MCF 10A (cell line): ENCODE measurements at regions of chr1 and their contacts with region 1.

Region 1: GRCh38 chr1:248622570-248623001 is 12.3 kb downstream of the OR2T11 start:
- DNase-seq: peak; percentile 71
- H3K4me3 Mint-ChIP-seq: no peak overlapping the region
- H3K27ac Mint-ChIP-seq: no peak overlapping the region
- H3K4me1 Mint-ChIP-seq: peaks cover 9% of the 10 kb centered on the region
- H3K27me3 Mint-ChIP-seq: no peaks in the 10 kb centered on the region
- CTCF ChIP-seq: peak; percentile 74

Region 2: DNA sequence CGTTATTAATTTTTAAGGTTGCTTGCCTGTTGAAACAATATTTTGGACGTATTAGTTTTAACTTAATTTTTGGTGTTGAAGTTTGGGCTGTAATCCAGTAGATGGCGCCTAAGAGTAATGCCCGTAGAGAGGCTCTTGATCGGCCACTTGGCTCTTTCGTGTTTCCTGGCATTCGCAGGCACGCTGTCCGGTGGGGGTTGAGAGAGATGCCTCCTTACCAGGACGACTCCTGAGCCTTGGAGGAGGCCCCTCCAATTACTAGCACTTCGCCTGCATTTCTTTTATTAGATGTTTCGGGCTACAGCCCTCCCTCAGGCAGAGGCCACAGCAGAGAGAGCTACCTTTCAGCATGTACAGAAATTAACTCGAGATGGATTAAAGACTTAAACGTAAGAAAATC is 379.4 kb before region 1 on chr1:
- CTCF ChIA-PET with region 1: interaction called, 22 read pairs
- POLR2A ChIA-PET with region 1: no interaction called
- intact Hi-C with region 1: loop called (anchors 2 kb)
- DNase-seq: peak; percentile 67
- H3K4me3 Mint-ChIP-seq: peak overlapping the region; percentile 64
- H3K27ac Mint-ChIP-seq: no peak overlapping the region
- H3K4me1 Mint-ChIP-seq: peaks cover 13% of the 10 kb centered on the region
- H3K27me3 Mint-ChIP-seq: no peaks in the 10 kb centered on the region
- CTCF ChIP-seq: peak; percentile 92

Region 3: DNA sequence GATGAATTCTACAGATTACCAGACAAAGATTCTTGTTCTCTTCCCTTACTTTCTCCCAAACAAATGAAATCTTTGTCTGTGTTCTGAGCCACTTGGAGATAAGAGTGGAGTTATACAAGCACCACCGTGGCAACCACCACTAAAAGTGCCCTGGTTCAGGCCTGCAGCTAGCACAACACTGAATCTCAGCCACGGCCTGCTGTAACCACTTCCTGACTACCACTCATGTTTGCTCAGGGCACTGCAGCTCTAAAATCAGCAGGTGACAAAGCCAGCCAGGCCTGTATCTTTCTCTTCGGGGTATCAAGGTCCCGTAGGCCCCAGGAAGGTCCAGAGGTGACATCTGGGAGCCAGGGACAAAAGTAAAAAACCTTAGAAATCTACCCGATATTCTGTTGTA is 250.2 kb before region 1 on chr1:
- CTCF ChIA-PET with region 1: no interaction called
- POLR2A ChIA-PET with region 1: no interaction called
- intact Hi-C with region 1: no loop called
- DNase-seq: no peak
- H3K4me3 Mint-ChIP-seq: no peak overlapping the region
- H3K27ac Mint-ChIP-seq: no peak overlapping the region
- H3K4me1 Mint-ChIP-seq: peaks cover 16% of the 10 kb centered on the region
- H3K27me3 Mint-ChIP-seq: no peaks in the 10 kb centered on the region
- CTCF ChIP-seq: no peak

Region 4: GRCh38 chr1:248576260-248576980 is 46.2 kb before region 1 on chr1:
- CTCF ChIA-PET with region 1: no interaction called
- POLR2A ChIA-PET with region 1: no interaction called
- intact Hi-C with region 1: no loop called
- DNase-seq: no peak
- H3K4me3 Mint-ChIP-seq: no peak overlapping the region
- H3K27ac Mint-ChIP-seq: no peak overlapping the region
- H3K4me1 Mint-ChIP-seq: peaks cover 12% of the 10 kb centered on the region
- H3K27me3 Mint-ChIP-seq: peaks cover 26% of the 10 kb centered on the region
- CTCF ChIP-seq: no peak

Region 5: DNA sequence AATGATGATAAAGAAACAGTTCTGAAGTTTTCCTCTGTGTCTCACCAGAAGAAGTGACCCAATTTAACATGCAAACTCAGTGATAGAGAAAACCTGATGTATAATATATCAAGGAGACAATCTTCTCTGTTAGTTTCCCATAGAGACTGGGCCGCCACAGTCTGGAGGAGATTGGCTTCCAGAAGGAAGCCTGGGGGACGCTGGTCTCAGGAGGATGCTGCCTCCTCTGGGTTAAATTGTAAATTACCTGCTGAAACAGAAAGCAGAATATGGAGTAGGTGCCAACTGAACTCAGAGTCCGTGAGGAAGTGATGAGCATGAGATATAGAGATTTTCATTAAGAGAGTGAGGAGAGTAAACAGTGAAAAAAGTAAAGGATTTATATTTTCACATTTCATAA is 64.2 kb after region 1 on chr1:
- CTCF ChIA-PET with region 1: interaction called, 23 read pairs
- POLR2A ChIA-PET with region 1: no interaction called
- intact Hi-C with region 1: loop called (anchors 1 kb)
- DNase-seq: peak; percentile 38
- H3K4me3 Mint-ChIP-seq: no peak overlapping the region
- H3K27ac Mint-ChIP-seq: peak overlapping the region; percentile 0
- H3K4me1 Mint-ChIP-seq: peaks cover 18% of the 10 kb centered on the region
- H3K27me3 Mint-ChIP-seq: no peaks in the 10 kb centered on the region
- CTCF ChIP-seq: peak; percentile 81

Region 6: GRCh38 chr1:248703674-248704073 is 81.1 kb after region 1 on chr1:
- CTCF ChIA-PET with region 1: interaction called, 27 read pairs
- POLR2A ChIA-PET with region 1: no interaction called
- intact Hi-C with region 1: loop called (anchors 1 kb)
- DNase-seq: no peak
- H3K4me3 Mint-ChIP-seq: no peak overlapping the region
- H3K27ac Mint-ChIP-seq: no peak overlapping the region
- H3K4me1 Mint-ChIP-seq: no peaks in the 10 kb centered on the region
- H3K27me3 Mint-ChIP-seq: no peaks in the 10 kb centered on the region
- CTCF ChIP-seq: peak; percentile 32

Region 7: GRCh38 chr1:248924696-248925532 is 302.3 kb after region 1 on chr1:
- CTCF ChIA-PET with region 1: interaction called, 14 read pairs
- POLR2A ChIA-PET with region 1: no interaction called
- intact Hi-C with region 1: no loop called
- DNase-seq: peak; percentile 85
- H3K4me3 Mint-ChIP-seq: no peak overlapping the region
- H3K27ac Mint-ChIP-seq: no peak overlapping the region
- H3K4me1 Mint-ChIP-seq: peaks cover 20% of the 10 kb centered on the region
- H3K27me3 Mint-ChIP-seq: no peaks in the 10 kb centered on the region
- CTCF ChIP-seq: peak; percentile 89